HepG2 (cell line): ENCODE measurements at regions of chr7 and their contacts with region 1.

Region 1: GRCh38 chr7:107879400-107880035 is 11.5 kb upstream of the DLD start:
- DNase-seq: peak; percentile 49
- ATAC-seq: peak; percentile 82
- H3K4me3 ChIP-seq: no peak overlapping the region
- H3K27ac ChIP-seq: no peak overlapping the region
- H3K4me1 ChIP-seq: no peaks in the 10 kb centered on the region
- H3K27me3 ChIP-seq: peaks cover 0 to 8% of the 10 kb centered on the region in 2 experiments; a peak in 1 of 5 replicates
- CTCF ChIP-seq: peak; percentile 85
- EP300 ChIP-seq: no peak
- POLR2A ChIP-seq: no peak
- RAD21 ChIP-seq: peak; percentile 62; the same call in 1 of the 2 replicates

Region 2: DNA sequence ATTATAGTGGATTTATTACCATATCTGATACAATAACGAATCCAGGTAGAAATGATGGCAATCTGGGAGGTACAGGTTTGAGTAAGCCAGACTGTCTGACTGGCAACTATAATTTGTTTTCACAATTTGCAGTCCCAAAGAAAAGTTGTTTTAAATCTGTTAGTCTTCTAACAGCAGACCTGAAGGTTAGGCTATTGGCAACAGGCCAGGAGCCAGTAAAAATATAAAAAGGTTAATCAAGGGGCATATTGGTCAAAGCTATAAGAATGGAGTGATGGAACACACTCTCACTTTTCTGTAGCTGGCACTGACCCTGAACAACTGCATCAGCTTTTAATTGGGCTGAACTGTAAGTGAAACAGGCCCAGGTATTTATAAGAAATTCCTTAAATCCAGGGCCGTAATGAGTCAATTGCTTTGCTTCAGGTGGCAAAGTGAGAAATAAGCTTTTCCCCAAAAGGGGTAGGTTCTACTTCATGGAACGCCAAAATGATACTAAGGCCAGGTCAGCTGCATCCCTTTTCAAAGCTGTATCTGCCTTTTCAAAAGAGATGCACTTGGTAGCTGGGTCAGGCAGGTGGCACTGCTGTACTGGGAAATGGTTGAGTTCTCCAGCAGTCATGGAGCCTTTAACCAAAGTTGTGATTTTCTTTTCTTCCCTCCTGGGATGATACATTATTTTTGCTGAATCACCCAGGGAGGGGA is 416.6 kb before region 1 on chr7:
- CTCF ChIA-PET with region 1: interaction called, 10 read pairs
- POLR2A ChIA-PET with region 1: no interaction called
- in situ Hi-C with region 1: loop called (anchors 25 kb)
- intact Hi-C with region 1: loop called (anchors 1 kb)
- DNase-seq: peak; percentile 52
- ATAC-seq: peak; percentile 94
- H3K4me3 ChIP-seq: no peak overlapping the region
- H3K27ac ChIP-seq: no peak overlapping the region
- H3K4me1 ChIP-seq: no peaks in the 10 kb centered on the region
- H3K27me3 ChIP-seq: no peaks in the 10 kb centered on the region
- CTCF ChIP-seq: peak; percentile 82
- EP300 ChIP-seq: no peak
- POLR2A ChIP-seq: no peak
- RAD21 ChIP-seq: peak; percentile 74

Region 3: DNA sequence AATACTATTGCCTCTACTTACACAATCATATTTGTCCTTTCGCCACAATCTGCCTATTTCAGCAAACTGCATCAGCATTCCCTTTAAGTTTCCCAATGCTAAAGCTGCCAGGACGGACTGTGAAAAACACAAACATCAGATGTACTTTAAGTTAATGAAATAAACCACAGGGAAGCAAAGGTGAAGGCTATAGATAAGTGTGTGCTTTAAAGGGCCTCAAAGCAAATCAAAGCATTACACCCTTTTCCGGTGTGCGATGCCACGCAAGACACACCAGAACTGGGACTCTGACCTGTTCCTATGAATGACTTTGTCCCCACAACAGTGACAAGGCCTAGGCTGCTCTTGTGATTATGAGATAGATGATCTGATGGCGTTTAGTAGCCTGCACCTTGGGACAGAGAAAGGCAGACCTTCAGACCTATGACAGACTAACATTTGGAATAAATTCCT is 99.8 kb before region 1 on chr7:
- CTCF ChIA-PET with region 1: no interaction called
- POLR2A ChIA-PET with region 1: interaction called, 3 read pairs
- in situ Hi-C with region 1: no loop called
- intact Hi-C with region 1: loop called (anchors 1 kb)
- DNase-seq: peak; percentile 96
- ATAC-seq: peak; percentile 99
- H3K4me3 ChIP-seq: no peak overlapping the region; a peak in 1 of 6 replicates
- H3K27ac ChIP-seq: peak overlapping the region; percentile 85
- H3K4me1 ChIP-seq: peaks cover 78% of the 10 kb centered on the region
- H3K27me3 ChIP-seq: no peaks in the 10 kb centered on the region
- CTCF ChIP-seq: no peak; the same call in 1 of the 2 replicates
- EP300 ChIP-seq: peak; percentile 66 to 98
- POLR2A ChIP-seq: peak in 1 of 2 experiments; percentile 28; a peak in 1 of 4 replicates
- RAD21 ChIP-seq: 0 out of 2 replicates have a peak, but pooled peaks have one; percentile 10

Region 4: DNA sequence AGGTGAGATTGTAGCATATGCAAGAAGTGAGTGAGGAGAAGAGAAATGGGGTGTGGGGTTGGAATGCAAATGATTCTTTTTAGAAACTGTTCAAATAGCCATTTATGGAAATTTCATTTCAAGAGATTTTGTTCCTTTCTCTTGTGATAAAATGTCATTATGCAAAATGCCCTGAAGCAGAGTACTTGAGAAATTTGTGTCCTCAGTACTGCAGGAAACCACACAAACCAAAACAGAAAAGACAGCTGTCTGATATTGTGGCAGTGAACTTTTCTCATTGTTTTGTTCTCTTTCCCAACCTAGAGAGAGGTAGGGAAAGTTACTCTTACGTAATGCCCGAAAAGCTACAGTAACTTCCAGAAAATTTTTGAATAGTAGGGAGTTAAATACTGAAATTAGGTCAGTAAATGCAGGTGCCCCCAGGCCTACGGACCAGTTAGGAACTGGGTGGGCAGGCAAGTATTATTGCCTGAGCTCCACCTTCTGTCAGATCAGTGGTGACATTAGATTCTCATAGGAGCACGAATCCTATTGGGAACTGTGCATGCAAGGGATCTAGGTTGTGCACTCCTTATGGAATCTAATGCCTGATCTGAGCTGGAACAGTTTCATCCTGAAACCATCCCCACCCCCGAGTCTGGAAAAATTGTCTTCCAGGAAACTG is 45.5 kb after region 1 on chr7:
- CTCF ChIA-PET with region 1: no interaction called
- POLR2A ChIA-PET with region 1: no interaction called
- in situ Hi-C with region 1: no loop called
- intact Hi-C with region 1: no loop called
- DNase-seq: no peak
- ATAC-seq: no peak
- H3K4me3 ChIP-seq: no peak overlapping the region
- H3K27ac ChIP-seq: no peak overlapping the region
- H3K4me1 ChIP-seq: no peaks in the 10 kb centered on the region
- H3K27me3 ChIP-seq: no peaks in the 10 kb centered on the region; a peak in 1 of 5 replicates
- CTCF ChIP-seq: no peak
- EP300 ChIP-seq: no peak
- POLR2A ChIP-seq: no peak
- RAD21 ChIP-seq: no peak

Region 5: DNA sequence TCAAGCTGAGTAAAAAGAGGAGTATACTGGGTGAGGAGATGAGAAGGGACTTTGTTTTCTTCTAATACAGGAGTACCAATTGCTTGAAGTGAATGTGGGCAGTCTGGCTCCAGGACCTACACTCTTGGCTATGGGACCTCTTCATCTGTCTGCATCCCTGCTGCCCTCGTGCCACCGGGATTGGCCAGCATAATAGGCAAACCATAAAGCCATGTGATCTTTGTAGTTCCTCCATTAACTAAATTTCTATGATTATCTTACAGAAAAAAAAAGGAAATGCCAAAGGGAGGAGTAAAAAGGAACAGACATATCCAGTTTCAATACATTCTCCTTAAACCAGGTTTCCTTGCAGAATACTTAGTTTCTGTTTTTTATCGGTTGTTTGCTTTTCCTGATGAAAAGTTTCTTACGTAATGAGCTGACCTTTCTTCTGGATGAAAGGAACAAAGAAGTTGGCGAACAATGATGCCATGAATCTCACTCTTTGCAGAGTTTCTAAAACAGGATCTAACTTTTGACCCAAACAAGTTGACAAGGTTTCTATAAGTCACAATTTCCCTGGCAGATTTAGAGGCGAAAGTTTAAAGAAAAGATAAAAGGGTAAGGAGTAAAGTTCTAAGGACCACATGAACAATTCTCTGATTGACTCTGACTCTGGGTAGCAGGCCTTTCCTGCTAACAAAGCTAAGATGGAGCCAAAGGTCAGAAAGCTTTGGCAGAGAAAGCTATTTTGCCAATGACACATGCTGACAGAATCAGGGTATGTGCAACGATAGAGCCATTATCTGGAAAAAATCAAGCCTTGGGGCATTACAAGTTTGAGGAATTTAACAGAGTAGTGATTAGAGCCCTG is 69.4 kb after region 1 on chr7:
- CTCF ChIA-PET with region 1: no interaction called
- POLR2A ChIA-PET with region 1: no interaction called
- in situ Hi-C with region 1: no loop called
- intact Hi-C with region 1: no loop called
- DNase-seq: peak; percentile 86
- ATAC-seq: peak; percentile 80
- H3K4me3 ChIP-seq: no peak overlapping the region; a peak in 1 of 6 replicates
- H3K27ac ChIP-seq: peak overlapping the region; percentile 60
- H3K4me1 ChIP-seq: peaks cover 57% of the 10 kb centered on the region
- H3K27me3 ChIP-seq: no peaks in the 10 kb centered on the region
- CTCF ChIP-seq: no peak
- EP300 ChIP-seq: peak in 1 of 2 experiments; percentile 71; a peak in 1 of 4 replicates
- POLR2A ChIP-seq: no peak
- RAD21 ChIP-seq: no peak

Region 6: DNA sequence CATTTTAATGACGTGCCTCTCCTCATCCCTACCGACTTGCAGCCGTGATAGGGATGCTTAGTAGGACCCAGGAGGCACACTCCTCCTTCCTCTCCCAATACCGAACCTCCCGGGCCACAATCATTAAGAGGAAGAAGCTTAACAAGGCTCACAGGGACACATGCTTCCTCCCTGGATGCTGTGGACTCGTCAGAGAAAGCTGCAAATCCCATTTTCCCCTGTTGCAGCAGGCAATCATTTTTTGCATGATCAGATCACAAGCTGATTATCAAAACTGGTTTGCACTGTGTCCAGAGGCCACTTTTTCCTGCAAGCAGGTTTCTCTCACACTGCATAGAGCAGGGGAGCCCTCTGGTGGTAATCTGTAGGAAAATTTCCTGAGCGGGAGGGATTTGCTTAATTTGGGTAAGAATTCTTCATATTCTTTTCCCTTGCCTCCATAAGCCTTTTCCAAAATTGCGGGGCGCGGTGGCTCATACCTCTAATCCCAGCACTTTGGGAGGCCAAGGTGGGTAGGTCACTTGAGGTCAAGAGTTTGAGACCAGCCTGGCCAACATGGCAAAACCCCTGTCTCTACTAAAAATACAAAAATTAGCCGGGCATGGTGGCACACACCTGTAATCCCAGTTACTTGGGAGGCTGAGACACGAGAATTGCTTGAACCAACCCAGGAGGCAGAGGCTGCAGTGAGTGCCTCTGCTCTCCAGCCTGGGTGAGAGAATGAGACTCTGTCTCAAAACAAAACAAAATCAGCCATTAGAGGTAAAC is 266.7 kb after region 1 on chr7:
- CTCF ChIA-PET with region 1: interaction called, 3 read pairs
- POLR2A ChIA-PET with region 1: no interaction called
- in situ Hi-C with region 1: no loop called
- intact Hi-C with region 1: loop called (anchors 2 kb)
- DNase-seq: peak; percentile 72
- ATAC-seq: peak; percentile 89
- H3K4me3 ChIP-seq: no peak overlapping the region; a peak in 1 of 6 replicates
- H3K27ac ChIP-seq: no peak overlapping the region
- H3K4me1 ChIP-seq: no peaks in the 10 kb centered on the region
- H3K27me3 ChIP-seq: peaks cover 0 to 9% of the 10 kb centered on the region in 2 experiments; a peak in 1 of 5 replicates
- CTCF ChIP-seq: peak; percentile 86
- EP300 ChIP-seq: no peak
- POLR2A ChIP-seq: no peak
- RAD21 ChIP-seq: peak; percentile 89